ENCODE measurements at regions of chr6 and their contacts with region 1.

Region 1: DNA sequence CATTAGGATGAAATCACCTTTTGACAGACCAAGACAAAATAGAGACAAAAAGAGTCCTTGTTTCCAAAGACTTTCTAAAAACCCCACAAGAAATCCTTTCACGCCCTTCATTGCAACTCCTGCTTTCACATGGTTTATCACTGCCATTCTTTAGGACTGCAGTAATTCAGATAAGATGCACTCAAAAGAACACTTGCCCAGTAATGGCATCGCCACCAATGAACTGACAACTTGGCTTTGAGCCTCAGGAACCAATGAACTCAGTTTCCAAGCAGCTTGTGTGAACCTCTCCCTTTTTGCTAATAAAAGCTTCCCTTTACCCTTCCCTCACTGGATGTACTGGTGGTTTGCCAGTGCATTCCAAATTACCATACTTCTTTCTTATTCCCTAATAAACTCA is 21.8 kb downstream of the OSTM1 start:
- DNase-seq: no peak
- ATAC-seq: no peak
- H3K4me3 ChIP-seq: no peak overlapping the region
- H3K27ac ChIP-seq: no peak overlapping the region
- H3K4me1 ChIP-seq: no peaks in the 10 kb centered on the region
- H3K27me3 ChIP-seq: no peaks in the 10 kb centered on the region
- CTCF ChIP-seq: no peak

Region 2: DNA sequence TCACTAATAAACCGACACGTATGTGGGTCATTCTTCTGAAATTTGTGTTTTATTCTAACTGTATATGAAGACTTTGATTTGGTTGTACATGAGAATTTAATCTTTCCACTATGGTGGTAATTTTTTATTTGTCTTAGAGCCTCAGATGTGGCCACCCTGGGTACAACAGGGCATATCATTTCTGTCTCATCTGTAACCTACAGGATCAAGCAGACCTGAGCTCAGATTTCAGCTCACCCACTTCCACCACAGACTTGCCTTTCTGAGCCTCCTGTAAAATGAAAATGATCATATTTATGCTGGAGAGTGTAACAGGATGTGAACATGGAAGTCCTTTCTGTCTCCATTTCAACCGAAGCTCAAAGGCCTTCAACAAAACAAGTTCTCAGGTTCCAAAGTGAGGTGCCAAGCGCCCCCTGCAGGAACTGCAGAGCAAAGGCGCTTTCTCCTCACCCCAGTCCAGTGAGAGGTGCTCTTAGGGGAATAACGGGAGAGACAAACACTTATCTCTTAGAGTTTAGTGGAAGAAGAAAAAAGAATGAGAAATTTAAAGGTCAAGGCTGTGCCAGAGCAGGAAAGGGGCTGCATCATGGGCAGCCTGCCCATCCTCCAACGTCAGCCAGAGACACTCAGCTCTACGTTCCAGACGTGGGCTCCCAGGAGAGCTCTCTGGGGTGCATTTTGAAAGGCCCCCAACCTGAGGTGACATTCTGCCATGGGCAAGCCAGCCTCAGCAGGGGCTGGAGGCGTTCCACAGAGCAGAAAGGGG is 1055.1 kb before region 1 on chr6:
- CTCF ChIA-PET with region 1: no interaction called
- POLR2A ChIA-PET with region 1: no interaction called
- intact Hi-C with region 1: no loop called
- DNase-seq: peak; percentile 61
- ATAC-seq: peak; percentile 73
- H3K4me3 ChIP-seq: no peak overlapping the region
- H3K27ac ChIP-seq: no peak overlapping the region
- H3K4me1 ChIP-seq: no peaks in the 10 kb centered on the region
- H3K27me3 ChIP-seq: no peaks in the 10 kb centered on the region
- CTCF ChIP-seq: peak; percentile 90

Region 3: DNA sequence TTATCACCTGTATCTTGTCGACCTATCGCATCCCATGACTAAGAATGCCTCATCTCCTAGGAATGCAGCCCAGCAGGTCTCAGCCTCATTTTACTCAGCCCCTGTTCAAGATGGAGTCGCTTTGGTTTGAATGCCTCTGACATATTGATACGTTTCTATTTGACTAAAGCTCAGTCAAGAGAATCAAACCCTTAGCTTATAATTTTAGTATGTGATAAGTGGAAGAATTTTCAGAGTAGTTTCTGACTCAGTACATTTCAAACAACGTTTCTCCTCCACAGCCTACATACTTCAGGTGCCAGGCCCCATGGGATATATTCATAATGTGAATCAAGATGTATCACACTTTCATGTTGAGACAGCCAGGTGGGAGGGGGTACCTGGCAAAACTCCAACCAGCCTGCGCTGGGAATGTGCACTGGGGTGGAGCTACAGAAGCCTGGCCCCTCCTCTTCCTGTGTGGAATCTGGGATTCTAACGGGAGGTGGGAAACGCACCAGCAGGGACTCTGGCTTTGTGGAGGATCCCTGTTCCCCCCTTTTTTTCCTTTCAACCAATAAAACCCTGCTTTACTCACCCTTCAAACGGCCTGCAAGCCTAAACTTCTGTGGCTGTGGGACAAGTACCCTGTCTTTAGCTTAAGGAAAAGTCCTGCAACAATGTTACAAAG is 87.9 kb before region 1 on chr6:
- CTCF ChIA-PET with region 1: interaction called, 10 read pairs
- POLR2A ChIA-PET with region 1: no interaction called
- intact Hi-C with region 1: no loop called
- DNase-seq: peak; percentile 83
- ATAC-seq: peak; percentile 55
- H3K4me3 ChIP-seq: no peak overlapping the region; the same call in 1 of the 2 replicates
- H3K27ac ChIP-seq: peak overlapping the region; percentile 81
- H3K4me1 ChIP-seq: peaks cover 27% of the 10 kb centered on the region
- H3K27me3 ChIP-seq: no peaks in the 10 kb centered on the region
- CTCF ChIP-seq: no peak

Region 4: GRCh38 chr6:107977283-107977682 is 75.4 kb before region 1 on chr6:
- CTCF ChIA-PET with region 1: interaction called, 5 read pairs
- POLR2A ChIA-PET with region 1: no interaction called
- intact Hi-C with region 1: loop called (anchors 1 kb)
- DNase-seq: peak; percentile 64
- ATAC-seq: peak; percentile 35; the same call in 1 of the 2 replicates
- H3K4me3 ChIP-seq: no peak overlapping the region
- H3K27ac ChIP-seq: no peak overlapping the region
- H3K4me1 ChIP-seq: 0 out of 2 replicates have a peak, but pooled peaks cover 3% of the 10 kb centered on the region
- H3K27me3 ChIP-seq: no peaks in the 10 kb centered on the region
- CTCF ChIP-seq: peak; percentile 59

Measured in PC-3 (cell line).